ENCODE measurements at regions of chr11 and their contacts with region 1.

Region 1: GRCh38 chr11:59171508-59172322 is at the start of gene DTX4:
- DNase-seq: peak; percentile 78 to 94 (median 86)
- ATAC-seq: peak; percentile 87
- H3K4me3 ChIP-seq: peak within 1 kb of the TSS; percentile 73
- H3K4me3 Mint-ChIP-seq: peak within 1 kb of the TSS; percentile 89
- H3K27ac ChIP-seq: no peak within 1 kb of the TSS
- H3K27ac Mint-ChIP-seq: peak within 1 kb of the TSS; percentile 31
- H3K4me1 ChIP-seq: peaks cover 18% of the 10 kb centered on the region
- H3K4me1 Mint-ChIP-seq: peaks cover 13% of the 10 kb centered on the region
- H3K27me3 ChIP-seq: no peaks in the 10 kb centered on the region
- H3K27me3 Mint-ChIP-seq: peaks cover 8% of the 10 kb centered on the region
- CTCF ChIP-seq: peak; percentile 87
- total RNA-seq, gene DTX4: 0.93 to 1.0 TPM

Region 2: DNA sequence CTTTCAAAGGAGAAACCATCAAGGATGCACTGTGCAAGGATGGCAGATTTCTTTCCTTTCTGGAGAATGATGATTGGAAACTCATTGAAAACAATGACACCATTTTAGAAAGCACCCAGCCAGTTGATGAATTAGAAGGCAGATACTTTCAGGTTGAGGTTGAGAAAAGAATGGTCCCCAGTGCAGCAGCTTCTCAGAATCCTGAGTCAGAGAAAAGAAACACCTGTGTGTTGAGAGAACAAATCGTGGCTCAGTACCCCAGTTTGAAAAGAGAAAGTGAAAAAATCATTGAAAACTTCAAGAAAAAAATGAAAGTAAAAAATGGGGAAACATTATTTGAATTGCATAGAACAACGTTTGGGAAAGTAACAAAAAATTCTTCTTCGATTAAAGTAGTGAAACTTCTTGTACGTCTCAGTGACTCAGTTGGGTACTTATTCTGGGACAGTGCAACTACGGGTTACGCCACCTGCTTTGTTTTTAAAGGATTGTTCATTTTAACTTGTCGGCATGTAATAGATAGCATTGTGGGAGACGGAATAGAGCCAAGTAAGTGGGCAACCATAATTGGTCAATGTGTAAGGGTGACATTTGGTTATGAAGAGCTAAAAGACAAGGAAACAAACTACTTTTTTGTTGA is 19.3 kb before region 1 on chr11:
- CTCF ChIA-PET with region 1: interaction called, 34 read pairs
- POLR2A ChIA-PET with region 1: interaction called, 3 read pairs
- intact Hi-C with region 1: no loop called
- DNase-seq: peak in 1 of 14 experiments; percentile 36
- ATAC-seq: no peak
- H3K4me3 ChIP-seq: peak overlapping the region; percentile 31
- H3K4me3 Mint-ChIP-seq: peak overlapping the region; percentile 72
- H3K27ac ChIP-seq: no peak overlapping the region
- H3K27ac Mint-ChIP-seq: peak overlapping the region; percentile 72
- H3K4me1 ChIP-seq: peaks cover 3% of the 10 kb centered on the region
- H3K4me1 Mint-ChIP-seq: peaks cover 35% of the 10 kb centered on the region
- H3K27me3 ChIP-seq: no peaks in the 10 kb centered on the region
- H3K27me3 Mint-ChIP-seq: no peaks in the 10 kb centered on the region
- CTCF ChIP-seq: no peak

Region 3: DNA sequence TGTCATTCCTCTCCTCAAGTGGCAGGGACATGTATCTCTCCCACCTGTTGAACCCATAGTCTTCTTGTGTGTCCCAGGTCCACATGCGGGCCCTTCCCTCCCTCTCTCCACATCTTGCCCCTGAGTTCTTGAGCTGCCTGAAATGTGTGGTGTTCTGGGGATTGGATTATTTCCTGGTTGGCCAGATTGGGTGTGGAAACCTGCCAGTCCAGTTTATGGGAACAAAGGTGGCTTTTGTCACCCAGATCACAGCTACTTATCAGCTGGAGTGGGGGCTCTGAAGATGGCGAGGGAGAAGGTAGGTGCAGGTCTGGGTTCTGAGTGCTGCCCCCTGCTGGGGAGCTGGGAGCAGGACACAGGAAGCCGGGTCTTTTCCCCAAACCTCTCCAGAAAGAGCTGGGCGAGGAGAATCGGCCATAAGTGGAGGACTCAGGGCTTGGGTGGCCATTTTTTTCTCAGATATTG is 14.4 kb after region 1 on chr11:
- CTCF ChIA-PET with region 1: interaction called, 26 read pairs
- POLR2A ChIA-PET with region 1: interaction called, 10 read pairs
- intact Hi-C with region 1: loop called in 1 of 2 experiments (anchors 2 kb)
- DNase-seq: peak in 13 of 14 experiments; percentile 22 to 74 (median 43)
- ATAC-seq: peak; percentile 70
- H3K4me3 ChIP-seq: no peak overlapping the region
- H3K4me3 Mint-ChIP-seq: no peak overlapping the region
- H3K27ac ChIP-seq: no peak overlapping the region
- H3K27ac Mint-ChIP-seq: no peak overlapping the region
- H3K4me1 ChIP-seq: peaks cover 6% of the 10 kb centered on the region
- H3K4me1 Mint-ChIP-seq: no peaks in the 10 kb centered on the region
- H3K27me3 ChIP-seq: no peaks in the 10 kb centered on the region
- H3K27me3 Mint-ChIP-seq: no peaks in the 10 kb centered on the region
- CTCF ChIP-seq: peak; percentile 75

Region 4: GRCh38 chr11:59273373-59273841 is 101.7 kb after region 1 on chr11:
- CTCF ChIA-PET with region 1: no interaction called
- POLR2A ChIA-PET with region 1: interaction called, 4 read pairs
- intact Hi-C with region 1: loop called in 1 of 2 experiments (anchors 2 kb)
- DNase-seq: peak in 3 of 14 experiments; percentile 49 to 65 (median 50)
- ATAC-seq: peak; percentile 84
- H3K4me3 ChIP-seq: no peak overlapping the region
- H3K4me3 Mint-ChIP-seq: peak overlapping the region; percentile 74
- H3K27ac ChIP-seq: no peak overlapping the region
- H3K27ac Mint-ChIP-seq: peak overlapping the region; percentile 79
- H3K4me1 ChIP-seq: peaks cover 27% of the 10 kb centered on the region
- H3K4me1 Mint-ChIP-seq: peaks cover 43% of the 10 kb centered on the region
- H3K27me3 ChIP-seq: no peaks in the 10 kb centered on the region
- H3K27me3 Mint-ChIP-seq: no peaks in the 10 kb centered on the region
- CTCF ChIP-seq: no peak

Region 5: GRCh38 chr11:59429924-59430516 is 258.3 kb after region 1 on chr11:
- CTCF ChIA-PET with region 1: interaction called, 10 read pairs
- POLR2A ChIA-PET with region 1: no interaction called
- intact Hi-C with region 1: loop called (anchors 1 kb)
- DNase-seq: peak in 9 of 14 experiments; percentile 2 to 76 (median 20)
- ATAC-seq: peak; percentile 64
- H3K4me3 ChIP-seq: no peak overlapping the region
- H3K4me3 Mint-ChIP-seq: no peak overlapping the region
- H3K27ac ChIP-seq: no peak overlapping the region
- H3K27ac Mint-ChIP-seq: no peak overlapping the region
- H3K4me1 ChIP-seq: no peaks in the 10 kb centered on the region
- H3K4me1 Mint-ChIP-seq: no peaks in the 10 kb centered on the region
- H3K27me3 ChIP-seq: peaks cover 0 to 4% of the 10 kb centered on the region in 2 experiments
- H3K27me3 Mint-ChIP-seq: peaks cover 17% of the 10 kb centered on the region
- CTCF ChIP-seq: peak; percentile 82

Region 6: GRCh38 chr11:59668950-59669610 is 497.4 kb after region 1 on chr11 and contains the start of gene PATL1:
- CTCF ChIA-PET with region 1: interaction called, 3 read pairs
- POLR2A ChIA-PET with region 1: no interaction called
- intact Hi-C with region 1: loop called in 1 of 2 experiments (anchors 10 kb)
- DNase-seq: peak; percentile 98 to 100 (median 99)
- ATAC-seq: peak; percentile 88
- H3K4me3 ChIP-seq: peak within 1 kb of the TSS; percentile 95
- H3K4me3 Mint-ChIP-seq: peak within 1 kb of the TSS; percentile 99
- H3K27ac ChIP-seq: peak within 1 kb of the TSS; percentile 98
- H3K27ac Mint-ChIP-seq: peak within 1 kb of the TSS; percentile 99
- H3K4me1 ChIP-seq: peaks cover 36% of the 10 kb centered on the region
- H3K4me1 Mint-ChIP-seq: peaks cover 52% of the 10 kb centered on the region
- H3K27me3 ChIP-seq: no peaks in the 10 kb centered on the region
- H3K27me3 Mint-ChIP-seq: no peaks in the 10 kb centered on the region
- CTCF ChIP-seq: no peak
- total RNA-seq, gene PATL1: 51.8 to 55.2 TPM

Measured in CD4-positive, alpha-beta T cell (primary cell).